ENCODE measurements at regions of chr12 and their contacts with region 1.

Region 1: DNA sequence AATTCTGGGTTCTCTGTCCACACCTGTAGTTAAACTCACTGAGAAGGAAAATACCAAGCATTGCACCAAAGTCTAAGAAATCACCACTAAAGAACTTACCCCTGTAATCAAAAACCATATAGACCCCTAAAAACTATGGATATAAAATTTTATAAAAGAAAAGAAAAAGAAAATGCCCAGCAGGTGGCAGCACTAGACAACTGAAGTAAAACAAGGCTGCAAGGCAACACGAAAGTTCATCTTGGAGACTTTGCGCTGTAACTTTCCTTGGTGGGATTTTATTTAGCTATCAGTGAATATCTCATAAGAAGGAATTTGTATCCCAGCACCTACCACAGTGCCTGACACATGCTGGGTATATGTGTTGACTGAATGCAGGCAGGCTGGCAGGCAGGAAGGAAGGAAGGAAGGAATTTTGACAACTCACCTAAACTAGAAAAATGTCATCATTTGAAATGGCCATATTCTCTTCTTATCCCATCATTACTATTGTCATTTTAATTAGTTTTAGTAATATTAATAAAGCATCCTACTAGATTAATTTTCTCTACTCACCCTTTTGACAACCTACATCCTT is 68.2 kb upstream of the ETV6 start:
- DNase-seq: no peak
- ATAC-seq: peak; percentile 23

Region 2: DNA sequence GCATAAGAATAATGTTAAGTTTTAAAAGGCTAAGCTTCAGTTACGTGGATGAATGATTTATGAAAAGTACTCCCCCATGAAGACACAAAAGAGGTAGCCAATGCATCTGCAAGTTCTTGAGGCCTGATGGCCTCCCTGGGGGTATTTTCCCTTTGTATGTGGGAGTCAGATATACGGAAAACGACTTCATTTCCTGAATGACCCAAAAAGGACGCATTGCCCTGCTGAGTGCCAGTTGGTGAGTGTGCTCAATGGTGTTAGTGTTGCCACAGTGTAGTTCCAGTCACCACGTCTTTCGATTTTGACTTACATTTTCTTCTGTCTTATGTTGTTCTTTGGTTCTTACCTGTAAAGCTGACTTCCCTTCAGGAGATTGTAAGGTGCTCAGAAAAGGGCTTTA is 76.2 kb after region 1 on chr12:
- intact Hi-C with region 1: no loop called
- DNase-seq: no peak
- ATAC-seq: no peak

Region 3: DNA sequence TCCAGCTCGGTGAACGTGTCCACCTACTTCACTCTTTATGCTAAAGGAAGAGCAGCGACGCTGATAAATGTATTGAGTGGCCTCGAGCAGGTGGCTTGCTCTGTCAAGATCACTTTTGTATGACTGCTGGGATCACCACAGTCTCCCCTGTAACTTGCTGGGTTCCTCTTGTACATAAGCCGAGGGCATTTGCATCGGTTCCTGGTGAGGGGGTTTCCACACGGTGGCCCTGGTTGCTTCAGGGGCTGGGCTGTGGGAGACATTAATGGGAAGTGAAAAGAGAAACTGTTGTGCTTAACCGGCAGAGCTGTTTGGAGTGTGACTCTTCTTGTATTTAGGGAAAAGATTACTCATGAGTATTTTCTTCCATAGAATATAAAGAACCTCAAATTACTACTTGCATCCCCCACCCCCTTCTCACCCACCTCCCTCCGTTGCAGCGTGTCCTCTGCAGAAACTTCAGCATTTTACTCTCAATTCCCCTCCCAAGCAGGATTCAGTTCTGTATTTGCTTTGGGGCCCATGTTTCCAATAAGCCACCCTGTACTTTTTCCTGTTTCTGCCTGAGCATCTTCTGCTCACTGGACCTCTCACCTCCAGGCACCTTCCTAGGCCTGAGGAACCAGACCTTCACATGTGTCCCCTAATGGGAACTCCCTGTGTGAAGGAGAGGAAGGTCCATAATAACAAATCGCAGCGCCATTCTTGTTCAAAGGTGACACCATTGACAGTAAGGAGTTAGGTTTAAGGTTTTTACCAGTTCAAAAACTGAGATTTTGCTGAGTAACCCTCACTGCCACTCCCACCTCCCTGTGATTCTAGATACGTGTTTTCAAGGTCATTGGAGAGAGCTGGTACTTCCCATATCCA is 255.2 kb after region 1 on chr12:
- intact Hi-C with region 1: no loop called
- DNase-seq: no peak
- ATAC-seq: peak; percentile 29

Region 4: GRCh38 chr12:11891754-11892386 is 310.6 kb after region 1 on chr12:
- intact Hi-C with region 1: loop called (anchors 10 kb)
- DNase-seq: peak; percentile 64
- ATAC-seq: peak; percentile 94

Region 5: GRCh38 chr12:12017798-12018197 is 436.5 kb after region 1 on chr12:
- intact Hi-C with region 1: loop called (anchors 5 kb)
- DNase-seq: no peak
- ATAC-seq: no peak

Region 6: DNA sequence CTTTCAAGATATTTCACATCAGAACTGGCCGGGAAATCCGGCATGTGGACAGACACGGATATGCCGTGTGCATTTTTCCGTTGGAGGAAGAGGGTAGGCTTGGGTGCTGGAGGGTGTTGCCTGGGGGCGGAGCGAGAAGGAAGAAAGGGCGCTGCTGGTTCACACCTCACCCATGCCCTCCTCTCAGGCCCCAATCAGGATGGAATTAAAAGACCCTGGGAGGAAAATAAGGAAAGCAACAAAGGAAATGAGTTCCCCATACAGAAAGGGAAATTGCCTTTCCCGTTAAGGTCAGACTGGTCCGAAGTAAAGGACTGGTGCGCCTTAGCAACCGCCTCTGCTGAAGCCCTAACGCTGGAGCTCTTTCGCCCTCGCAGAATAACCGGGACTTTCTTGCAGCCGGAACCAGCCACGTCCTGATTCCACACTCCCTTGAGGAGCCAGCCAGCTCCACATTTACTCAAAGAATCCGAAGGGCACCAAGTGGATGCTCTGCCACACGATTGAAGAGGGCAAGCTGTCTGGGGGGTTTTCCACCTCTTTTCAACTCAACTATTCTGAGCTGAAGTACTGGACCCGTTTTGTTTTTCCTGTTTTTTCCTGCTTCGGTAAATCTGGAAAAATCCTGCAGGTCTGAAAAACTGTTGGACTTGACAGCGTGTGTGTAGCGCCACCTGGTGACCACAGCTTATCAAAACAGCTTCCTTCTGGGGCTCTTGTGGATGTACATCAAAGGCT is 451.8 kb after region 1 on chr12:
- intact Hi-C with region 1: loop called (anchors 1 kb)
- DNase-seq: no peak
- ATAC-seq: peak; percentile 78

Region 7: GRCh38 chr12:12334367-12335040 is 753.2 kb after region 1 on chr12:
- intact Hi-C with region 1: loop called (anchors 10 kb)
- DNase-seq: no peak
- ATAC-seq: peak; percentile 60

Measured in Right ventricle myocardium inferior (tissue), 1 donor.